A673 (cell line): ENCODE measurements at regions of chr3 and their contacts with region 1.

Region 1: DNA sequence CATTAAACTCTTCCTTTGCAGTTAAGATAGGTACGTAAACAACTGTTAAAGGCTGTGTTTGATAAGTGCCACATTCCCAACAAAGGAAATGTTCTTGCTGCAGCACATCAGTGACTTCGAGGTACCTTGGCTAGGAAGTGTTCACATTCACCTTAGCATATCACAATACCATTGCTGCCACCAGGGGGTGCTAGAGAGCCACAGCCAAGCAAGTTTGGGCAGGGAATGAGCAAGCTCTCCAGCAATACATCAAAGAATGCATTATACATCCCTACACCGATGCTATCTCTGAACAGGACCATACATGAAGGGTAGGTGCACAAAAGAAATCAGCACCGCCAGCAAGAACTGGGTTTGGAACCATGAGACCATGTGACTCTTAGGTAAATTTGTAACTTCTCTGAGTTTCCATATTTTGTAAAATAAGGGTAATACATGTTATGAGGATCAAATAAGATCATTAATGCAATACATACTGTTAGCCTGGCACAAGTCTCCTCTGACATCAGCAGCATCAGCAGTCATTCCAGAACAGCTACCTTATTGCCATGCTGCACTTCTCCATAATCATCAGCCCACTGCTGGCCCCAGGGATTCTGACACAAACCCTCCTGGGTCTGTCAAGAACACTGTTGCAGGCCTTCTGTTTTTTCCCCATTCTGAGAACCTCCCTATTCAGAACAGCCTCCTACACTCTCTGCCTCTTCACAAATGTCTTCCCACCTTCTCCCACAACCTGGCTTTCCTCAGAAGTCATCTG is 37.6 kb downstream of the RYK start:
- DNase-seq: peak; percentile 86
- H3K4me3 ChIP-seq: no peak overlapping the region
- H3K27ac ChIP-seq: no peak overlapping the region
- H3K4me1 ChIP-seq: no peaks in the 10 kb centered on the region
- H3K27me3 ChIP-seq: no peaks in the 10 kb centered on the region
- CTCF ChIP-seq: peak; percentile 97

Region 2: DNA sequence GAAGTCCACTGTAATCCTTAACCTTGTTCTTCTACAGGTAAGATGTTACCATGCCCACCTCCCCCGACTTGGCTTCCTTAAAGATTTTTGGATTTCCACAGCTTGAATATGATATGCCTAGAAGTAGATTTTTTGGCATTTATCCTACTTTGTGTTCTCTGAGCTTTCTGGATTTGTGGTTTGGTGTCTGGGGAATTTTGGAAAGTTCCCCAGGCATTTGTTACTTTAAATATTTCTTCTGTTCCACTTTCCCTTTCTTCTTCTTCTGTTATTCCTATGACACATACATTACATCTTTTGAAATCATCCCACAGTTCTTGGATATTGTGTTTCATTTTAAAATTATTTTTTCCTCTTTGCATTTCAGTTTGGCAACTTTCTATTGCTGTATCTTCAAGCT is 1297.0 kb before region 1 on chr3:
- CTCF ChIA-PET with region 1: no interaction called
- POLR2A ChIA-PET with region 1: no interaction called
- intact Hi-C with region 1: no loop called
- DNase-seq: no peak
- H3K4me3 ChIP-seq: no peak overlapping the region
- H3K27ac ChIP-seq: no peak overlapping the region
- H3K4me1 ChIP-seq: no peaks in the 10 kb centered on the region
- H3K27me3 ChIP-seq: peaks cover 17% of the 10 kb centered on the region
- CTCF ChIP-seq: no peak

Region 3: GRCh38 chr3:133812872-133813271 is 400.2 kb before region 1 on chr3:
- CTCF ChIA-PET with region 1: no interaction called
- POLR2A ChIA-PET with region 1: no interaction called
- intact Hi-C with region 1: loop called (anchors 10 kb)
- DNase-seq: no peak
- H3K4me3 ChIP-seq: no peak overlapping the region
- H3K27ac ChIP-seq: no peak overlapping the region
- H3K4me1 ChIP-seq: no peaks in the 10 kb centered on the region
- H3K27me3 ChIP-seq: no peaks in the 10 kb centered on the region
- CTCF ChIP-seq: no peak

Region 4: GRCh38 chr3:133943639-133944141 is 269.4 kb before region 1 on chr3:
- CTCF ChIA-PET with region 1: no interaction called
- POLR2A ChIA-PET with region 1: no interaction called
- intact Hi-C with region 1: no loop called
- DNase-seq: no peak
- H3K4me3 ChIP-seq: no peak overlapping the region
- H3K27ac ChIP-seq: no peak overlapping the region
- H3K4me1 ChIP-seq: no peaks in the 10 kb centered on the region
- H3K27me3 ChIP-seq: no peaks in the 10 kb centered on the region
- CTCF ChIP-seq: no peak

Region 5: GRCh38 chr3:134287512-134287911 is 74.4 kb after region 1 on chr3:
- CTCF ChIA-PET with region 1: no interaction called
- POLR2A ChIA-PET with region 1: no interaction called
- intact Hi-C with region 1: no loop called
- DNase-seq: no peak
- H3K4me3 ChIP-seq: no peak overlapping the region
- H3K27ac ChIP-seq: no peak overlapping the region
- H3K4me1 ChIP-seq: peaks cover 10% of the 10 kb centered on the region
- H3K27me3 ChIP-seq: no peaks in the 10 kb centered on the region
- CTCF ChIP-seq: no peak

Region 6: DNA sequence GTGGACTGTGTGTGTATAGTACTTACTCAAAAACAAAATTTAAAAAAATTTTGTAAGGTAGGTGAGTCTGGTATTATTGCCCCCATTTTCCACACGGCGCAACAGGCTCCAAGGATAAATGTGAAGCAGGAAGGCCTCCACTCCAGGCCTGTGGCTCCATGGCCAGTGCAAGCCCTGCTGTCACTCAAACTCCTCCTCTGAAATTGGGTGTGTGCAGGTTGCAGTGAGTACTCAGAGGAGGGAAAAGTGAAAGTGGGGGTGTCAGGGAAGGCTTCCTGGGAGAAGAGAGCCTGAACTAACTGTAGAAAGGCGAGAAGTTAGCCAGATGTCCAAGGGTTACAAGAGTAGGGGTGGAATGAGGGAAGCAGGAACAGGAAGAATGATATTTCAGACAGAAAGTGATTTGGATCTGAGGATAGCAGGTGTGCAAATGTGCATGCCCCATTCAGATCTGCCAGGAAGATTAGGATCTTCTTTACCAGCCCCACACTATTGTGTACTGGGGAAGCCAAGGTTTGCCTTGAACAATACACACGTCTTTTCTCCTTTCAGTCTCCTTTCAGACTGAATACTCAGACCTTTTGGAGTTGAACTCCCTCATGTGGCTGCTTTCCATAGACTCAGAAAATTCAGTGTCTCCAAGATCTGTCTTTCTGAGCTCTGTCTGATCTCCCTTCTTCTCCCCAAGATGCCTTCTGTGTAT is 86.2 kb after region 1 on chr3:
- CTCF ChIA-PET with region 1: interaction called, 19 read pairs
- POLR2A ChIA-PET with region 1: no interaction called
- intact Hi-C with region 1: loop called (anchors 1 kb)
- DNase-seq: peak; percentile 50
- H3K4me3 ChIP-seq: no peak overlapping the region
- H3K27ac ChIP-seq: no peak overlapping the region
- H3K4me1 ChIP-seq: no peaks in the 10 kb centered on the region
- H3K27me3 ChIP-seq: no peaks in the 10 kb centered on the region
- CTCF ChIP-seq: peak; percentile 42; the same call in 1 of the 2 replicates

Region 7: GRCh38 chr3:134373994-134374790 is 161.1 kb after region 1 on chr3 and contains the start of gene AMOTL2:
- CTCF ChIA-PET with region 1: interaction called, 3 read pairs
- POLR2A ChIA-PET with region 1: no interaction called
- intact Hi-C with region 1: loop called (anchors 2 kb)
- DNase-seq: peak; percentile 93
- H3K4me3 ChIP-seq: peak within 1 kb of the TSS; percentile 68
- H3K27ac ChIP-seq: peak within 1 kb of the TSS; percentile 98
- H3K4me1 ChIP-seq: peaks cover 40% of the 10 kb centered on the region
- H3K27me3 ChIP-seq: no peaks in the 10 kb centered on the region
- CTCF ChIP-seq: no peak
- total RNA-seq, gene AMOTL2: 38.9 and 59.6 TPM in 2 replicates

Region 8: GRCh38 chr3:134473868-134474546 is 260.9 kb after region 1 on chr3:
- CTCF ChIA-PET with region 1: interaction called, 7 read pairs
- POLR2A ChIA-PET with region 1: no interaction called
- intact Hi-C with region 1: loop called (anchors 1 kb)
- DNase-seq: peak; percentile 81
- H3K4me3 ChIP-seq: no peak overlapping the region
- H3K27ac ChIP-seq: no peak overlapping the region
- H3K4me1 ChIP-seq: no peaks in the 10 kb centered on the region
- H3K27me3 ChIP-seq: no peaks in the 10 kb centered on the region
- CTCF ChIP-seq: peak; percentile 81